MCF 10A (cell line): ENCODE measurements at regions of chr19 and their contacts with region 1.

Region 1: GRCh38 chr19:17932485-17933338 is at the start of gene CCDC124:
- DNase-seq: peak; percentile 94
- H3K4me3 Mint-ChIP-seq: peak within 1 kb of the TSS; percentile 95
- H3K27ac Mint-ChIP-seq: peak within 1 kb of the TSS; percentile 99
- H3K4me1 Mint-ChIP-seq: peaks cover 6% of the 10 kb centered on the region
- H3K27me3 Mint-ChIP-seq: no peaks in the 10 kb centered on the region
- CTCF ChIP-seq: peak; percentile 98
- total RNA-seq, gene CCDC124: 122 and 131 TPM in 2 replicates

Region 2: DNA sequence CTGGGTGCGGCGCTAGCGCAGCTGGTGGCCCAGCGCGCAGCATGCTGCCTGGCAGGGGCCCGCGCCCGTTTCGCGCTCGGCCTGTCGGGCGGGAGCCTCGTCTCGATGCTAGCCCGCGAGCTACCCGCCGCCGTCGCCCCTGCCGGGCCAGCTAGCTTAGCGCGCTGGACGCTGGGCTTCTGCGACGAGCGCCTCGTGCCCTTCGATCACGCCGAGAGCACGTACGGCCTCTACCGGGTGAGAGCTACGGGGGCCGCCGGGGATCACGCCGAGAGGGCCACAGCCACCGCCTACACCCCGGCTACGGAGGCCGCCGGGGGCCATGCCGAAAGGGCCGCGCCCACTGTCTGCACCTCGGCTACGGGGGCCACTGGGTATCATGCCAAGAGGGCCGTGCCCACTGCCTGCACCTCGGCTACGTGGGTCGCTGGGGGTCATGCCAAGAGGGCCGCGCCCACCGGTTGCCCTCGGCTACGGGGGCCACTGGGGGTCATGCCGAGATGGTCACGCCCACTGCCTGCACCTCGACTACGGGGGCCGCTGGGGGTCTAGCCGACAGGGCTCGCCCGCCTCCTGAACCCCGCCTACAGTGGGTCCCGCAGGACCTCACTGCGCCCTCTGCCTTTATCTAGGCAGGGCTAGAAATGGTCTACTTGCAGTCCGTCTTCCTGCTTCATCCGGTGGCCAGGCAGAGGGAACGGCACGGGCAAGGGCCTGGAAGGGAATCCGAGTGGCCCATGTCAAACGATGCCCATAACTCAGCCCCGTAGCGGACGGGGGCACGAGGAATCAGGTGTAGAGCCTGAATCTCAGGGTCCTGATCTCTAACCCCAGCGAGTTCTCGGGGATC is 420.8 kb before region 1 on chr19:
- CTCF ChIA-PET with region 1: no interaction called
- POLR2A ChIA-PET with region 1: interaction called, 11 read pairs
- intact Hi-C with region 1: no loop called
- DNase-seq: peak; percentile 79
- H3K4me3 Mint-ChIP-seq: peak overlapping the region; percentile 98
- H3K27ac Mint-ChIP-seq: peak overlapping the region; percentile 99
- H3K4me1 Mint-ChIP-seq: peaks cover 22% of the 10 kb centered on the region
- H3K27me3 Mint-ChIP-seq: no peaks in the 10 kb centered on the region
- CTCF ChIP-seq: no peak

Region 3: GRCh38 chr19:17873786-17874757 is 58.6 kb before region 1 on chr19:
- CTCF ChIA-PET with region 1: interaction called, 90 read pairs
- POLR2A ChIA-PET with region 1: interaction called, 71 read pairs
- intact Hi-C with region 1: loop called (anchors 1 kb)
- DNase-seq: peak; percentile 48
- H3K4me3 Mint-ChIP-seq: no peak overlapping the region
- H3K27ac Mint-ChIP-seq: no peak overlapping the region
- H3K4me1 Mint-ChIP-seq: no peaks in the 10 kb centered on the region
- H3K27me3 Mint-ChIP-seq: no peaks in the 10 kb centered on the region
- CTCF ChIP-seq: no peak

Region 4: DNA sequence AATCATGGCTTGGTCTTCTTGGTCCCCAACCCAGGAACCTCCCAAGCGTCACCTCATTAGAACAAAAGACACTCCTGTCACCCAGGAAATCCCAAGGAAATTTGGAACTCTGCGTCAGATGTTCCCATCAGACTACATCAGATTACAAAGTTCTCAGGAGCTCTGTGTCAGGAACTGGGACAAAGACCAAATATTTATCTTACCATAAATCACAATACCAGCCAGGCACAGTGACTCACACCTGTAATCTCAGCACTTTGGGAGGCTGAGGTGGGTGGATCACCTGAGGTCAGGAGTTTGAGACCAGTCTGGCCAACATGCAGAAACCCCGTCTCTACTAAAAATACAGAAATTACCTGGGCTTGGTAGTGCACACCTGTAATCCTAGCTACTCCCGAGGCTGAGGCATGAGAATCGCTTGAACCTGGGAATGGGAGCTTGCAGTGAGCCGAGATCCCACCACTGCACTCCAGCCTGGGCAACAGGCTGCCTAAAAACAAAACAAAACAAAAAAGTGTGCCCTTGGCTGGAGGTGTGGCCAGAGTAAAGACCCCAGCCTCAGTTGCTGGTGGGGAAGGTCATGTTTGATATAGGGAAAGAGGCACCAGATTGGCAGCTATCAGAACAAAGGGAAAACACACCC is 16.6 kb before region 1 on chr19:
- CTCF ChIA-PET with region 1: interaction called, 5 read pairs
- POLR2A ChIA-PET with region 1: interaction called, 10 read pairs
- intact Hi-C with region 1: no loop called
- DNase-seq: peak; percentile 80
- H3K4me3 Mint-ChIP-seq: no peak overlapping the region
- H3K27ac Mint-ChIP-seq: no peak overlapping the region
- H3K4me1 Mint-ChIP-seq: no peaks in the 10 kb centered on the region
- H3K27me3 Mint-ChIP-seq: no peaks in the 10 kb centered on the region
- CTCF ChIP-seq: no peak

Region 5: DNA sequence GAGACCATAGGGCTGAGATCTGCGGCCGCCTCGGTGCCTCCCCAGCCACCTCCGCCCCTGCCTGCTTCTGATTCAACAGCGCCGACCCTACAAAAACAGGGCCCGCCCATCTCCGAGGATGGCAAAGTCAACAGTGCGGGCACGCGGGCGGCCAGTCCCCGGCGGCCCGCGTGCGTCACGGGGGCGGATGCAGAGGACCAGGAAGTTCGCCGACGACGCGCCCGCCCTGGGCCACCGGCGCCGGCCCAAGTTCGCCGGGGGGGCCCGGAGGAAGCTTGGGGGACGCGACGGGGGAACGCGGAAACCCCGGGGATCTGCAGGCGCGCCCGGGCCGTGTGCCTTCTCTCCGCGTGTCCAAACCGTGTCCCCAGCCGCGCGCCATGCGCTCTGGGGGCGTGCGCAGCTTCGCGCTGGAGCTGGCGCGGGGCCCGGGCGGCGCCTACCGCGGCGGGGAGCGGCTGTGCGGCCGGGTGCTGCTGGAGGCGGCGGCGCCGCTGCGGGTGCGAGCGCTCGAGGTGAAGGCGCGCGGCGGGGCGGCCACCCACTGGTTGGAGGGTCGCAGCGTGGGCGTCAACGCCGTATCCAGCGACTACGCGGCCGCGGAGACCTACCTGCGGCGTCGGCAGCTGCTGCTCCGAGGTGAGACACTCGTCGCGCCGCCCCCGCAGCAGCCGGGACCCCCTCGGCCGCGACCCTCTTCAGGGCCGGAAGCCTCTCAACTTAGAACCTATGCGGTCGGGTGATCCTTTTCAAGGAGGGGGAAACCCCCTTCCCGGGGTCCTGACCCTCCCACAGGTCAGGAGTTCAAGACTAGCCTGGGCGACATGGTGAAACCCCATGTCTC is 68.4 kb after region 1 on chr19:
- CTCF ChIA-PET with region 1: interaction called, 224 read pairs
- POLR2A ChIA-PET with region 1: interaction called, 38 read pairs
- intact Hi-C with region 1: no loop called
- DNase-seq: peak; percentile 88
- H3K4me3 Mint-ChIP-seq: peak overlapping the region; percentile 77
- H3K27ac Mint-ChIP-seq: peak overlapping the region; percentile 94
- H3K4me1 Mint-ChIP-seq: peaks cover 6% of the 10 kb centered on the region
- H3K27me3 Mint-ChIP-seq: no peaks in the 10 kb centered on the region
- CTCF ChIP-seq: no peak